Mammary epithelial cell (primary cell): ENCODE measurements at regions of chr4 and their contacts with region 1.

Region 1: DNA sequence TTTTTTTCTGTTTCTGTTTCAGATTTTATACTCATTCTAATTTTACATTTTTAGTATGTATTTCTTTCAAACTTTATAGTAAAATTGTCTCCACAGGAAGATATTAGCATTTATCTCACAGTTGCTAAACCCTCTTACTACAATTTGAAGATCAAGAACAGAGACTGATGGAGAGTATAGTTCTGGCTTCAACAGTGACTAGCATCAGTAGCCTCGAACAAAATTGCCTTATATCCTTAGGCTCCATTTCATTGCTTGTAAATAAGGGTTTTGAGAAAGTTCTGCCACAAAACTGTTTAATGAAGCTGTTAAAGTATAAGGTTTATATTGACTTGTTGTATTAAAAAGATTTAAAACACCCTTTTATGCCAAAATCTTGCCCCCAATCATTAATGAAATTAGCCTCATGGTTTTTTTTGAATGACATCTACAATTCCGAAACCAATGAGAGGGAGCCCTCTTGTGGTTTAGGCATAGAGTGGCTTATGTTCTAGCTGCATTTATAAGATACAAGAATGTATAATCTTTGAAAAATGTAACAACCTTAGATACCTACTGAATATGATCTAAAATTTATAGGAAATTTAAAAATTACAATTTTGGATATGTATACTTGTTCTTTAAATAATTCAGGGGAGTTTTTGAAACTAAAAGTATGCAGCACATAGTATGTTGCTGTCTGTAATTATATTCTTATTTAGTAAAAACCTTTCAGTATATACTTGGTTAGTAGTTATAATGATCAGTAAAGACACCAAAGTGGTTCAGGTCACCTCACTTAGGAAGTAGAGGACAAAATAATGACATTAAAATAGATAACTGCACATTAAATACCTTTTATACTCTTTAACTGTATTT is 109.8 kb upstream of the HPGD start:
- DNase-seq: peak; percentile 24
- H3K4me3 ChIP-seq: no peak overlapping the region
- H3K27ac ChIP-seq: no peak overlapping the region
- H3K4me1 ChIP-seq: no peaks in the 10 kb centered on the region
- H3K27me3 ChIP-seq: no peaks in the 10 kb centered on the region
- CTCF ChIP-seq: peak; percentile 79 to 81

Region 2: GRCh38 chr4:174365018-174365587 is 267.0 kb before region 1 on chr4:
- CTCF ChIA-PET with region 1: no interaction called
- dilution Hi-C with region 1: loop called (anchors 10 kb)
- in situ Hi-C with region 1: loop called (anchors 5 to 10 kb)
- intact Hi-C with region 1: loop called (anchors 1 kb)
- DNase-seq: no peak
- H3K4me3 ChIP-seq: no peak overlapping the region
- H3K27ac ChIP-seq: no peak overlapping the region
- H3K4me1 ChIP-seq: no peaks in the 10 kb centered on the region
- H3K27me3 ChIP-seq: no peaks in the 10 kb centered on the region
- CTCF ChIP-seq: peak; percentile 34 to 39

Region 3: DNA sequence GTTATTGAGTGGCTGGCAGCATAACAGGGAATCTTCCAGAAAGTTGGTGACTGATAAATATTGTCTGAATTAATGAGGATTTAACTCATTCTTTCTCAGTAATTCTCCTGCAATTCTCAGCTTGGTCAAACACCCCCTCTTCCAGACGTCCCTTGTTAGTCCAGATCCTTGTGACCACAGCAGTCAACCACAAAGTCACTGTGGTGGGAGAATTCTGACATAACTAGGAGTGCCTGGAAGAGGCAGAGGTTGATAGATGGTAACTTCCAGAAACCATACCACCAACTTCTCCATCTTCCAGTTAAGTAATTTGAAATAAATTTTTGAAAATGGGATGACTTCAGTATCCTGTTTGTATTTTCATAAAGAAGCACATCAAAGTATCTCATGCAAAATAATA is 258.3 kb before region 1 on chr4:
- CTCF ChIA-PET with region 1: no interaction called
- dilution Hi-C with region 1: loop called (anchors 10 kb)
- in situ Hi-C with region 1: loop called (anchors 5 to 10 kb)
- intact Hi-C with region 1: no loop called
- DNase-seq: no peak
- H3K4me3 ChIP-seq: no peak overlapping the region
- H3K27ac ChIP-seq: no peak overlapping the region
- H3K4me1 ChIP-seq: no peaks in the 10 kb centered on the region
- H3K27me3 ChIP-seq: no peaks in the 10 kb centered on the region
- CTCF ChIP-seq: no peak

Region 4: DNA sequence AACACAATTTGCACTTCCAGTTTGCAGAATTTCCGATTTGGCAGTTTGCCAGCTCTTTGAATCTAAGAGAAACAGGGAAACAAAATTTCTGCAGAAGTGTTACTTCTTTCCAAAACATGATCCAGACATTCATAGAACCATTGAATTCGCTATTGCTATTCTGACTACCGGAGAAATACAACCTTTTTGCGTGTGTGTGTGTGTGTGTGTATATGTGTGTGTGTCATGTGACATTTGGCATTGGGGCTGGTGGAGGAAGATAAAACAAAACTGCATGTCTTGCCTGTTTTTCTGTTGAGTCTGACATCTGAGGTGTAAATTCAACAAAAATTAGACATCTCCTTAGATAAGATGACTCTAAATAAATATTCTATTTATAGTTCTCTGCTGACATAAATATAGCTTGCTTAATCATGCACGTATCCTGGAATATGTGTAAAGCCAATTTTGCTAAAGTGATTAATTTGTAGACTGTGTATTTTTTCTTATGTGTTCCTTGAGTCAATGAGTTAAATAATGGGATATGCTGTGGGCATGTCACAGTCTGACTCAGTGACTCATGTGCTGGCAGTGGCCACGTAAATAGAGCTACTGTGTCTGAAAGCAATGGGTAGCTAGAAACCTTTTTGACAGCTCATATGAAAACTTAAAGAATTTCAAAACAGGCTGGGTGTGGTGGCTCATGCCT is 208.7 kb before region 1 on chr4:
- CTCF ChIA-PET with region 1: no interaction called
- dilution Hi-C with region 1: no loop called
- in situ Hi-C with region 1: no loop called
- intact Hi-C with region 1: loop called (anchors 5 kb)
- DNase-seq: peak; percentile 95
- H3K4me3 ChIP-seq: peak overlapping the region in 2 of 3 experiments; percentile 11 to 20
- H3K27ac ChIP-seq: peak overlapping the region; percentile 64
- H3K4me1 ChIP-seq: peaks cover 14% of the 10 kb centered on the region
- H3K27me3 ChIP-seq: peaks cover 2% of the 10 kb centered on the region
- CTCF ChIP-seq: no peak

Region 5: DNA sequence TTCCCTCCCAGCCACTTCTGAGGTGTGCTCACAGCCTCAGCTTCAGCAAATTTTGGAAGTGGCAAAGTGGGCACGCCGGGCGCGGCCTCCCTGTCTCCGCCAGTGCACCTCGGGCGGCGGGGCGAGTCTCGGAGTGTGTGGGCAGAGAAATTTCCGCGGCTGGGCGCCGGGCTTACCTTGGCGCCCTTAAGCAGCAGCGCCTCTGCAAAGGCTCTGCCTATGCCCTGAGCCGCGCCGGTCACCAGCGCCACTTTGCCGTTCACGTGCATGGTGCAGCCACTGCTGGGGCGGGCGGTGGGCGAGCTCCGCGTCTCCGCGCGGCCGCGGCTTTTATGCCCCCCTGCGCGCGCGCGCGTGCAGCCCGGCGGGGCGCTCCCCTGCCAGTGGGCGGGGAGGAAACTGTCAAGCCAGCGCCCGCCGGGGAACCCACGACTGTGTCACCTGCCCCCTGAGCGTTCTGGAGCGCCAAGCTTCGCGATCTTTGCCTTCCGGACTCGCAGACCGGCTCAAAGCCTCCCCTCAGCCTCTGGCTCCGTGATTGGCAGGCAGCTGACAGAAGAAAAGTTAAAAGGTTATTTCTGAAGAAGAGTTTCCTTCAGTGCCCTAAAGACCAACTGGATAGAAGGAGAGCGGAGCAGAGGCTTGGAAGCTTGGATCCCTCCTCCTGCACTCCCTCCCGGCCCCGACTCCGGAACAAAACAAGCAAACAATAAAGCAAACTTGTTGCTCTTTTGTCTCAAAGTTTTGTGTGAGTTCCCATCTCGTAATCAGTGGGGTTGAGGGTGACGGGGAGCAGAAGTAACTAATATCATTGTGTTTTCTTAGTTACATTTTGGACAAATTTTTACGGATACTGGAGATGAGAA is 109.7 kb before region 1 on chr4 and contains the start of gene HPGD:
- CTCF ChIA-PET with region 1: no interaction called
- dilution Hi-C with region 1: no loop called
- in situ Hi-C with region 1: no loop called
- intact Hi-C with region 1: loop called (anchors 1 kb)
- DNase-seq: peak; percentile 20
- H3K4me3 ChIP-seq: peak within 1 kb of the TSS; percentile 51 to 60 (median 59)
- H3K27ac ChIP-seq: no peak within 1 kb of the TSS
- H3K4me1 ChIP-seq: peaks cover 7% of the 10 kb centered on the region
- H3K27me3 ChIP-seq: peaks cover 8% of the 10 kb centered on the region
- CTCF ChIP-seq: no peak
- total RNA-seq, gene HPGD: 0.24 to 1.2 TPM

Region 6: GRCh38 chr4:174553828-174554227 is 78.3 kb before region 1 on chr4:
- CTCF ChIA-PET with region 1: no interaction called
- dilution Hi-C with region 1: no loop called
- in situ Hi-C with region 1: no loop called
- intact Hi-C with region 1: no loop called
- DNase-seq: peak; percentile 72
- H3K4me3 ChIP-seq: no peak overlapping the region
- H3K27ac ChIP-seq: no peak overlapping the region
- H3K4me1 ChIP-seq: peaks cover 11% of the 10 kb centered on the region
- H3K27me3 ChIP-seq: no peaks in the 10 kb centered on the region
- CTCF ChIP-seq: no peak

Region 7: DNA sequence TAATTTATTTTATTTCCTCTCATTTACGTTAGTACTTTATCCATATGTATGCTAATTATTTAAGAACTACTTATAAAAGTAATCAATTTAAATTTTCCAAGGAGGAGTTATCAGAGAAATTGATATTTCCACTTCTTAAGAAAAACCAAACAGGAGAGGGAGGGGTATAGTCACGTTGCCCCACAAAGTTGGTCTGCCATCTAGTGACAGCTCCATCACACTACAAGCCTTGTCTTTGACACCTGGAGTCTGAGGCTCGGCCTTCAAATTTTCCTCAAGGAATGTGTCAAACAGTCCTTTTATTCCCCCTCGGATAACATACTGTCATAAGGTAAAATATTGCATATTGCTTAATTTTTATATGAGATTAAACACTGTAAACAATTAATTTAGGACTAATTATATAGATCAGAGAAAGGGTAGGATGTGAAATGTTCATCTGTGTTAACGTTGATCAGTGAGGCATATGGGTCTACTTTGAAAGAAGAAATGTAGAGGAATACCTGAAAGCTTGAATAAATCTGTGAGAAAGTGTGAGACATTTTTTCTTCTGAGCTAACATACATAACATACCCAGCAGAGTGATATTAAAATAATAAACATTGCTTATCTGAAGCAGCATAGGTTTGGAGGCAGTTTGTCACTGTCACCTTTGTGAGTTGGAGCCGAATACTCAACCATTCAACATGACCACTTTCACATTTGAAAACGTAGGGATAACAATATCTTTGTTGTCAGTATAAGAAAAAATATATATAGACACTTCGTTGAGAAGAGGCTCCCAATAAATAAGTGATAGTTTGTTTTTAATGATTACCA is 82.5 kb after region 1 on chr4:
- CTCF ChIA-PET with region 1: no interaction called
- dilution Hi-C with region 1: no loop called
- in situ Hi-C with region 1: no loop called
- intact Hi-C with region 1: loop called (anchors 5 kb)
- DNase-seq: peak; percentile 36
- H3K4me3 ChIP-seq: no peak overlapping the region
- H3K27ac ChIP-seq: no peak overlapping the region
- H3K4me1 ChIP-seq: no peaks in the 10 kb centered on the region
- H3K27me3 ChIP-seq: no peaks in the 10 kb centered on the region
- CTCF ChIP-seq: peak; percentile 78 to 90

Region 8: DNA sequence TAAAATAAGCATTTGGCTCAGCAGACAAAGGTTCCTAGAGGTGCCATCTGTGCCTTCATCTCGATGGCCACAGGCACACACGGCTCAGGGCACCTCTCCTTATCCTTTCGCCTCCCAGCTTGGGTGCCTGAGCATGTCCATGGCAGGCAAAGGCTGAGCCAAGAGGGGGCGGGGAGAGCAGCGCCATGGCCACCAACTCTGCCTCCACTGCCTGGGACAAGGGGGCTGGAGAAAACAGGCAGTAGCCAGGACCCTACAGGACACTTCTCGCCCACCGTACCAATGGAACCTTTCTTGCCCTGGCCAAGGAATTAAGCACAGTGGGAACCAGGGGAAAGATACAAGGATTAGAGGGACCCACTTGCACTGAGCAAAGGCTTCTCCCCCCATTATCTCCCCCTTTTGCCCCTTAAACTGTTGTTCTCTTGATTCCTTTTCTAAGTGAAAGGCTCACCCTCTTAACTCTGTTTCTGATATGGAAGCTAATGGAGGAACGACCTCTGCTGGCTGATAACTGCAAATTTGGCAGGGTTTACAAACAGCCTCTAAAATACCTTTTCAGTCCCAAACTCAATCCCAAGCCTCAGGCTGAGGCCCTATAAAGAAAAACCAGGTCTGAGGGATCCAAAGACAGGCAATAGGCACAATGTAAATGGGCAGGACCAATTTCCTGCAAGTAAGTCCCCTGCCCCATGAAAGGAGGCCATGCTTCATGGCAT is 621.2 kb after region 1 on chr4:
- CTCF ChIA-PET with region 1: no interaction called
- dilution Hi-C with region 1: no loop called
- in situ Hi-C with region 1: no loop called
- intact Hi-C with region 1: loop called (anchors 10 kb)
- DNase-seq: no peak
- H3K4me3 ChIP-seq: no peak overlapping the region
- H3K27ac ChIP-seq: no peak overlapping the region
- H3K4me1 ChIP-seq: no peaks in the 10 kb centered on the region
- H3K27me3 ChIP-seq: no peaks in the 10 kb centered on the region
- CTCF ChIP-seq: peak in 1 of 2 donors; percentile 36